Heart left ventricle (tissue), 16 donors: ENCODE measurements at regions of chr5 and their contacts with region 1.

Region 1: DNA sequence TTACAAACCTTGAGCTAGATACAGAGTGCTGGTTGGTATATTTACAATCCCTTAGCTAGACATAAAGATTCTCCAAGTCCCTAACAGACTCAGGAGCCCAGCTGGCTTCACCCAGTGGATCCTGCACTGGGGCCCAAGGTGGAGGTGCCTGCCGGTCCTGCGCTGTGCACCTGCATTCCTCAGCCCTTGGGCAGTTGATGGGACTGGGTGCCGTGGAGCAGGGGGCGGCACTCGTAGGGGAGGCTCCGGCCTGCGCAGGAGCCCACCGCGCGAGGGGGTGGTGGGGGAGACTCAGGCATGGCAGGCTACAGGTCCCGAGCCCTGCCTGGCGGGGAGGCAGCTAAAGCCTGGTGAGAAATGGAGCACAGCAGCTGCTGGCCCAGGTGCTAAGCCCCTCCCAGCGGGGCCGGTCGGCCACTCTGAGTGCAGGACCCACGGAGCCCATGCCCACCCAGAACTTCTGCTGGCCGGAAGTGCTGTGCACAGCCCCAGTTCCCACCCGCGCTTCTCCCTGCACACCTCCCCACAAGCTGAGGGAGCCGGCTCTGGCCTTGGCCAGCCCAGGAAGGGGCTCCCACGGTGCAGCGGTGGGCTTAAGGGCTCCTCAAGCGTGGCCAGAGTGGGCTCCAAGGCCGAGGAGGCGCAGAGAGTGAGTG is 1464.7 kb downstream of the EFNA5 start:
- DNase-seq: peak in 1 of 5 donors; percentile 44
- ATAC-seq: peak in 1 of 4 donors; percentile 22
- H3K4me3 ChIP-seq: no peak overlapping the region
- H3K27ac ChIP-seq: no peak overlapping the region
- H3K4me1 ChIP-seq: no peaks in the 10 kb centered on the region
- H3K27me3 ChIP-seq: no peaks in the 10 kb centered on the region
- CTCF ChIP-seq: no peak
- POLR2A ChIP-seq: no peak

Region 2: DNA sequence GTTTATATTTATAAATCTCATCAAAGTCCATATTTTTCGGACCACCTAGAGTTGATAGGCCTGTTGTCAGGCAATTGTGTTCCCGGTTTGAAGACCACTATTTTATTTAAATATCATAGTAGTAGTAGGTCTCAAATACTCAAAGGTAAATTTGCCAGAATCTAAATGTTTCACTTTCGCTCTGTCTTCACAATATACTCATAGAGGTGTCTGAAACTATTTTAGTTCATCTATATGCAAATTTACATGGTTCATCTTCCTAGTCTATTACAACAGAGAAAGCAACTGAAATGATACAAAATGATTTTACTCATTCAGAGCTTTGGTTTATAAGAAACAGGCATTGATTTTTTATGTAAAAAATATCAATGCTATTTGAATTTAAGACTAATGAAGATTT is 432.8 kb before region 1 on chr5:
- intact Hi-C with region 1: loop called in 1 of 10 experiments (anchors 10 kb)
- DNase-seq: no peak
- ATAC-seq: no peak
- H3K4me3 ChIP-seq: no peak overlapping the region
- H3K27ac ChIP-seq: no peak overlapping the region
- H3K4me1 ChIP-seq: no peaks in the 10 kb centered on the region
- H3K27me3 ChIP-seq: no peaks in the 10 kb centered on the region
- CTCF ChIP-seq: no peak
- POLR2A ChIP-seq: no peak

Region 3: DNA sequence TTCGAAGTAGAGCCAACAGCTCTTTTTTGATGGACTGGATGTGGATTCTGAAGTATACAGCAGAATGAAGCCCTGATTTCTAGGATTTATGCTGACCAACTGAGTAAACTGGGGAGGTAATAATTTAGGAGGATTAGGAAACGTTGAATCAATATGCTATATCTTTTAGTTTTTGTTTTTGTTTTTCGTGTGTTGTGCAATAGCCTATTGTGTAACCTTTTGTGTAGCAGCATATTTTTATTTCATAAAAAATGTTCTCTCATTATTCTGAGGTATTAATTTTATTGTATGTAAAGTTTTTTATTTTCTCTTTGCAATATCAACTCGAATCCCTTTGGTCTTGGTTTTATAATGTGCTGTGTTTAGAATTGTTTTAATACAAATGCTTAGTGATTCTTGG is 562.3 kb after region 1 on chr5:
- intact Hi-C with region 1: no loop called
- DNase-seq: no peak
- ATAC-seq: no peak
- H3K4me3 ChIP-seq: no peak overlapping the region
- H3K27ac ChIP-seq: no peak overlapping the region
- H3K4me1 ChIP-seq: no peaks in the 10 kb centered on the region
- H3K27me3 ChIP-seq: no peaks in the 10 kb centered on the region
- CTCF ChIP-seq: no peak
- POLR2A ChIP-seq: no peak